Ascending aorta (tissue), 2 donors: ENCODE measurements at regions of chrX and their contacts with region 1.

Region 1: DNA sequence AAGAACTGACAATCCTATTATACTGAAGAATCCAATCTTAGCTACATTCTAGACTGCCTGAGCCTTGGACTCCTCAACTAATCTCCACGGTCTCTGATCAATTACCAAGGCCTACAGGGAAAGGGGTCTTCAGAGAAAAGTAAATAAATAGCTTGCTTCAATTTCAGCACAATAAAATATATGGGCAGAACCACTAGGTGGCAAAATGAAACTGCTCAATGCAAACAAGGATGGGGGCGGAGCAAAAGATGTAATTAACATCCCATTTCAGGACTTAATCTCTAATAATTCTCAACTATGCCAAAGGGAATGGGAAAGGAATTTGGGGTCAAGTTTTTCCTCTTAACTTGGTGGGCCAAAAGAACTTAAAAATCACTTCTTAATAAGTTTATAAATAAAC is 78.4 kb upstream of the MAP3K15 start:
- DNase-seq: no peak
- H3K4me3 ChIP-seq: no peak overlapping the region
- H3K27ac ChIP-seq: no peak overlapping the region
- H3K4me1 ChIP-seq: no peaks in the 10 kb centered on the region
- H3K27me3 ChIP-seq: no peaks in the 10 kb centered on the region
- CTCF ChIP-seq: peak in 1 of 3 experiments; percentile 53

Region 2: DNA sequence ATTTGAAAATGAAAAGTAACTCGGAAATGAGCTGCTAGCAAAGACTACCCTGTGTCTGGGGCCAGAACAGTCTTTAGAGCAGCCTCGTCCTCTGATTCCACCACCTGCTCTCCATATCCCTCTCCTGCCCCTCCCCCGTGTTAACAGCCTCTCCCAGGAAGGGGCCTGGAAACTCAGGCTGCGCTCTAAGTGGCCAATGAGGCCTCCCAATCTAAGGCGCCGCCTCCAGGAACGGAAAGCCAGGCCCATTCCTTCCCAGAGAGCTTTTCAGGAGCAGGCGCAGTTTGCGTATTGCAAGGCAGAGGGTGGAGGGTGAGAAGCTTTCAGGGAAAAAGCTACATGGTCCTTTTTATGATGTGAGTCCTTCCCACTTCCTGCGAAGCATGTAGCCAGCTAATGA is 953.0 kb before region 1 on chrX:
- intact Hi-C with region 1: no loop called
- DNase-seq: no peak
- H3K4me3 ChIP-seq: no peak overlapping the region
- H3K27ac ChIP-seq: no peak overlapping the region
- H3K4me1 ChIP-seq: no peaks in the 10 kb centered on the region
- H3K27me3 ChIP-seq: no peaks in the 10 kb centered on the region
- CTCF ChIP-seq: no peak

Region 3: DNA sequence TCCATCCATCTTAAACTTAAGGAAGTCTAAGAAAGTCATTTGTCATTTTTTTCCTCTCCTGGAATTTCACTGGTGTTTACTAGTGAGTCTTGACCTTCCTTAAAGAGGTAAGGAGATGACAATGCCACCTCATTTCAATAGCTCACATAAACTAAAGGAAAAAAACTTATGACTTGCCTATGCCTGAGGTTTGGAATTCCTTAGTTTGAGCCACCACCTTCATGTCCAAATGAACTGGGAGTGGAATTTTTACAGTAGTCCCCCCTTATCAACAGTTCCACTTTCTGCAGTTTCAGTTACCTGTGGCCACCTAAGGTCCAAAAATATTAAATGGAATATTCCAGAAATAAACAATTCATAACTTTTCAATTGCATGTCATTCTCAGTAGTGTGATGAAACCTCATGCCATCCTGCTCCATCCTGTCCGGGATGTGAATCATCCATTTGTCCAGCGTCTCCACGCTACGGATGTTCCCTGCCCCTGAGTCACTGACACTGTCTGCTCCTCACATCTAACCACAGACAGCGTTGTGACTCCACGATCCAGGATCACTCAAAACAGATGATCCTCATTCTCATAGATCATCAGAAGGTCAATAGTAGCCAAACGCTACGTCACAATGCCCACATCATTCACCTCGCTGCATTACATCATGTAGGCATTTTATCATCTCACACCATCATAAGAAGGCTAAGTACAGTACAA is 116.3 kb after region 1 on chrX:
- intact Hi-C with region 1: loop called (anchors 10 kb)
- DNase-seq: no peak
- H3K4me3 ChIP-seq: no peak overlapping the region
- H3K27ac ChIP-seq: no peak overlapping the region
- H3K4me1 ChIP-seq: no peaks in the 10 kb centered on the region
- H3K27me3 ChIP-seq: no peaks in the 10 kb centered on the region
- CTCF ChIP-seq: no peak